Activated CD4-positive, alpha-beta T cell treated with anti-CD3 and anti-CD28 coated beads, Interleukin-2, amount 10 ng/mL, durations not matched to agents 24 days and 14 days (primary cell): ENCODE measurements at regions of chr13 and their contacts with region 1.

Region 1: DNA sequence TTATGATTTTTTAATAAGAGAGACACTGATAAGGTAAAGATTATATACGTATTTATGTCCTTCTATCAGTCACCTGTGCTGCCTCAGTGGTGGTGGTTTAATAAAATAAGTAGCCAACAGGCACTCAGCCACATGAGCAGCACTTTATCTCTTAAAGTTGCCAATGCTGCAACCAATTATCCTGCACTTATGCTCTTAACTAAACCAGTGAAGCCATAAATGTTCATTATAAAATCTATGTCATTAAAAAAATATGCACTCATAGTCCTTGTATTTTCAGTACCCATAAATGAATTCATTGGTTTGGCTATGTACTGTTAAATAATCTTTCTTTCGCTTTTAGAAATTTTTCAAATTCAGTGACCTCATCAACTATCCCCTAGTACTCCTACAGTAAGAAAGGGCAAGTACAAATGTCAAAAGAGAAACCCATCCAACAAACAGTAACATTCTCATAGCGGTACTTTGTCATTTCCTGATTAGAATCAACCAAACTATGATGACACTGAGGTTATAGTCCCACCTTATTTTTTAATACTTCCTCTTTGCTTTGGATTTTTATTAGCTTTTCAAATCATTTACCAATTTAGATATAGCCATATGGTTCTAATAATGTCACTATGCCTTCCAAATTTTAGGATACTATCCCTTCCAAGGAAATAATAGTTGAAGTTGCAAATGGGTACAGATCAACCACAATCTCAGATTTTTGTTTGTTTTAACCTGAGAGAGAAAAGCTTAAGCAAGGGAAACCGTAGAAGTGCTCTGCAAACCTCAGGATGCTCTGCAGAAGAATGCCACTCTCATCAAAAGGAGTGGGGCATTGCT is 190.9 kb downstream of the KLF12 start:
- DNase-seq: no peak
- H3K4me3 Mint-ChIP-seq: peak overlapping the region; percentile 24
- H3K27ac Mint-ChIP-seq: peak overlapping the region; percentile 69
- H3K4me1 Mint-ChIP-seq: peaks cover 25% of the 10 kb centered on the region
- H3K27me3 Mint-ChIP-seq: no peaks in the 10 kb centered on the region

Region 2: GRCh38 chr13:73924607-73925006 is 18.7 kb before region 1 on chr13:
- intact Hi-C with region 1: loop called (anchors 2 kb)
- DNase-seq: no peak
- H3K4me3 Mint-ChIP-seq: no peak overlapping the region
- H3K27ac Mint-ChIP-seq: peak overlapping the region; percentile 77
- H3K4me1 Mint-ChIP-seq: peaks cover 23% of the 10 kb centered on the region
- H3K27me3 Mint-ChIP-seq: no peaks in the 10 kb centered on the region